Gastrocnemius medialis (tissue), 4 donors: ENCODE measurements at regions of chr15 and their contacts with region 1.

Region 1: DNA sequence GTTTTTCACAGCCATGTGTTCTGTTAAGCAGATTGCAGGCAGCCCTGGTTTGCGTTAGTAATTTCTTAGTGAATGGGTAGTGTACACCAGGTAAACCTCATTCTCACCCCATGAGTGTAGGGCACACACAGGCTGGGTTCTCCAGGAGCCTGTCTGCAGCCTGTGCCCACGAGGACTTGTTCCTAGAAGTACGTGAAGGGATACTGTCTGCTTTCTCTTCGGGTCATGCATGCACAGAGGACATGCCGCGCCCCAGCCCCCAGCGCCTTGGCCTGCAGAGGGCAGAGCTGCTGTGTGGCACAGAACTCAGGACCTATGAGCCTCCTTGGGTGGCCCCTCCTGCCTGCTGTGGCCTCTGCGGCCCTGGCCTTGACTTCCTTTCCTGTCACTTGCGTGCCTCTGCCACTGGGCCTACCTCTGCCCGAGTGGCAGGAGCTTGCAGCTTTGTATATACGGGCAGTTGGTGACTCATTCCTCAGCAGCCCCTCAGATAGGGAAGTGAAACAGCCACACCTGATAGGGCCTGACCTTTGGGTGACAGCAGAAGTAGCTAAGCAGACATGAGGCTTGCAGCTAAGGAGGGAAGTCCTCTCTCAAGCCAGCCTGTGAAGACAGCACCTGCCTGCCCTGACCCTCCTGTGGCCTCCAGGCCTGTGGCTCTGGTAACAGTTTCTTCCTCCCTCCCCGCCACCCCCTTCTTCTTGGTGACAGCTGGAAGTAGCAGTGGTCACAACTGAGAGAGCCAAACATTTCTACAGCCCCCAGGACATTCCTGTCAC is 19.5 kb downstream of the PPCDC start:
- DNase-seq: peak in 1 of 2 donors; percentile 60
- ATAC-seq: peak; percentile 18 to 28
- H3K4me3 ChIP-seq: no peak overlapping the region
- H3K27ac ChIP-seq: peak overlapping the region; percentile 71 to 80 (median 78)
- H3K4me1 ChIP-seq: peaks cover 61 to 64% of the 10 kb centered on the region in 2 donors
- H3K27me3 ChIP-seq: no peaks in the 10 kb centered on the region
- CTCF ChIP-seq: peak in 3 of 5 experiments; percentile 22 to 36 (median 26)
- POLR2A ChIP-seq: no peak

Region 2: DNA sequence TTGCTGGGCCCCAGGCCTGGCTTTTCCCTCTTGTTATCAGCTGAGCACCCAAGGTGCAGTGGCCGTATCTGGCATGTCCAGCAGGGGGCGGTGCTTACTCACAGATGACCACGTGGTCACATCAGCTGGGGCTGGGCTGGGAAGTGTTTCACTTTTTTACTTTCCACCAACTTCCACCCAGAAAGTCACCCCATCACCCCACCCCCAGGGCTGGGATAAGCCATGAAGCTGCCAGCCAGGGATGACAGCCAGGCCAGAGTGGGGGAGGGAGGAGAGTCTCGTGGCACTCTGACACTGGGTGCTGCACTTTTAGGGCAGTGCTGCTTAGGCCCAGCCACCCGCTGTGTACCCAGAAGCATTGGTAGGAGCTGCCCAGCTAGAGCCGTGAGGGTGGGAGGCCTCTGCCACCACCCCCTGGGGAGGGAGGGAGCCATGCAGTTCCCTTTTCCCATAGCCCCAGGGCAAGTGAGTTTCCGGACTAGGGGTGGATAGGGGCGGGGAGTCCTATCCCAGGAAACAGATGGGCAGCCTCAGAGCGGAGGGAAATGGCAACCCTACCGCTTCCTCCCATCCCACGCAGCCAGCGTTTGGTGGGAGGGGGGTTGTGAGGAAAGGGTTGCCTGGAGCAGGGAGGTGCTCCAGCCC is 13.4 kb before region 1 on chr15:
- in situ Hi-C with region 1: no loop called
- intact Hi-C with region 1: loop called (anchors 1 kb)
- DNase-seq: peak; percentile 80 to 84
- ATAC-seq: peak; percentile 83 to 84
- H3K4me3 ChIP-seq: peak overlapping the region; percentile 6 to 42 (median 32)
- H3K27ac ChIP-seq: peak overlapping the region; percentile 29 to 70 (median 62)
- H3K4me1 ChIP-seq: peaks cover 16 to 34% of the 10 kb centered on the region in 2 donors
- H3K27me3 ChIP-seq: no peaks in the 10 kb centered on the region
- CTCF ChIP-seq: peak; percentile 83 to 97 (median 94)
- POLR2A ChIP-seq: no peak

Region 3: GRCh38 chr15:75153087-75153486 is 110.2 kb after region 1 on chr15:
- in situ Hi-C with region 1: no loop called
- intact Hi-C with region 1: no loop called
- DNase-seq: peak in 1 of 2 donors; percentile 14
- ATAC-seq: peak in 1 of 2 donors; percentile 24
- H3K4me3 ChIP-seq: no peak overlapping the region
- H3K27ac ChIP-seq: no peak overlapping the region
- H3K4me1 ChIP-seq: no peaks in the 10 kb centered on the region
- H3K27me3 ChIP-seq: no peaks in the 10 kb centered on the region
- CTCF ChIP-seq: no peak
- POLR2A ChIP-seq: no peak